ENCODE measurements at regions of chr12 and their contacts with region 1.

Region 1: DNA sequence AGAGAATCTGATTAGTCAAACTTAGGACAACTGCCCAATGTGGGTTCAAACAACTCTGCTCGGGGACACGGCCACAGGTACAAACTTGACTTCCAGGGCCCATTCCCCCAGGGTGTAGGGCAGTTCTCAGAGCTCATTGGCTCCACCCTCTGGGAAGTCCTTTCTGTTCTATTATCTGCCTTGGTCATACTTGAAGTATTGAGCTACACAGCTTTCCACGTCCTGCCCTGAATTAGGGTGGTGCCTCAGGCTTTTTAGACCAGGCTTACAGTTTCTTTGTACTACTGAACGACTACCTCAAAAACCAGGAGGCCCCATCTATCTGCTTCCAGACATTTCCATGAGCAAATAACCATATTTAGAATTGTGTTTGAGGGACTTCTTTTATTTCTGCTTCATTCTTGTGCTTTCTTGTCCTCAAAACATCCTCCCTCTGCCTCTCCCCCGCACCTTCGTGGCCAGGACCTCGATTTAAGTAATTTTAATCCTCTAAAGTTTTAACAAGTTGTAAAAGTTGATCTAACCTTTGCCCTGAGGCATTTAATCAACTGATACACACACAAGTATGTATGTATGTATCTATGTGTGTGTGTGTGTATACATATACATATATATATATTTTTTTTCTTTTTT is 281.7 kb upstream of the AMIGO2 start:
- DNase-seq: peak; percentile 81
- H3K4me3 Mint-ChIP-seq: peak overlapping the region; percentile 72
- H3K27ac Mint-ChIP-seq: peak overlapping the region; percentile 98
- H3K4me1 Mint-ChIP-seq: peaks cover 58% of the 10 kb centered on the region
- H3K27me3 Mint-ChIP-seq: no peaks in the 10 kb centered on the region

Region 2: DNA sequence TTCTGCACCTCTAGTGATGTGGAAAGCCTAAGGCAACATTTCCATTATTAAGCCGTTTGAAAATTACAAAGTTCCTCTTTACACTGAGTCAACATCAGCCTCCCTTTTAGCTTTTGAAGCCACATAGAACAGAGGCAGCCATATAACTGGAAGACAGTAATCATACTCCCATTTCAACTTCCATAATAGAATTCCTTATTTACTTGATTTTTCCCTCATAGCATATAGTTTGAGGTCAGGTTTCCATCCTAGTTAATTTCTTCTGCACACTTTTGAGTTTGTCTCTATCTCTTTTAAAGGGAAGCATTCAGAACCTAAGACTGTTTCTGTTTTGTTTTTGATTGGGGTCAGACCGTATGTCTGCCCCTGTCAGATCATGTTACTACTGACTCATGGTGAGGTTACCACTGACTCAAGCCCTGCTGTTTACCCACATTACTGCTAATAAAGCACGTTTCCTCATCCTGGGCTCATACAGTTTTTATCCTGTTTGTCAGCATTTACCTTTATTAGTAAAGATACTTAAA is 696.7 kb before region 1 on chr12:
- CTCF ChIA-PET with region 1: no interaction called
- intact Hi-C with region 1: no loop called
- DNase-seq: peak; percentile 33
- H3K4me3 Mint-ChIP-seq: no peak overlapping the region
- H3K27ac Mint-ChIP-seq: peak overlapping the region; percentile 63
- H3K4me1 Mint-ChIP-seq: peaks cover 21% of the 10 kb centered on the region
- H3K27me3 Mint-ChIP-seq: no peaks in the 10 kb centered on the region

Region 3: DNA sequence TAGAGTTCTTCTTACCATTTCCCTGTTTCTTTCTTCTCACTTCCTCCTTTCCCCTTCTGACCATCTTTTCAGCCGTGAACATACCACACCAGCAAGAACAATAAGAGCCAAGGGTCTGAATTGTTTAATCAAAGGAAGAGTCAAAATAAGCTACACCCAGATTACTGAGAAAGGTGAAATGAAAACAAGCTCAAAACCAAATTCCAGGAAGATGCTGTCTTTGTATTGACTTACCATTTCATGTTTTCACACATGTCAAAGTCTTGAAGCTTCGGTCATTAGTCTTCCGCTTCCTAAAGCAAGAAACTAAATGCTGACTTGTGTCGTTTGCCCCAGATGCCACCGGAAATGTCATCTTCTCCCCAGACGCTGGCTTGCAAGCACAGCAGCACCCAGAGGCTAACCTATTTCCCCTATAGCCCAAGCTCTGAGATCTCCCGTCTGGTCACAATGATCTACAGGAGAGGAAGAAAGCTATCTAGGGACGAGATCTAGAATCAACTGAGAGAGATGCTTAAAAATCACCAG is 145.3 kb before region 1 on chr12:
- CTCF ChIA-PET with region 1: interaction called, 4 read pairs
- intact Hi-C with region 1: loop called (anchors 1 kb)
- DNase-seq: peak; percentile 83
- H3K4me3 Mint-ChIP-seq: peak overlapping the region; percentile 94
- H3K27ac Mint-ChIP-seq: peak overlapping the region; percentile 100
- H3K4me1 Mint-ChIP-seq: peaks cover 12% of the 10 kb centered on the region
- H3K27me3 Mint-ChIP-seq: no peaks in the 10 kb centered on the region

Region 4: DNA sequence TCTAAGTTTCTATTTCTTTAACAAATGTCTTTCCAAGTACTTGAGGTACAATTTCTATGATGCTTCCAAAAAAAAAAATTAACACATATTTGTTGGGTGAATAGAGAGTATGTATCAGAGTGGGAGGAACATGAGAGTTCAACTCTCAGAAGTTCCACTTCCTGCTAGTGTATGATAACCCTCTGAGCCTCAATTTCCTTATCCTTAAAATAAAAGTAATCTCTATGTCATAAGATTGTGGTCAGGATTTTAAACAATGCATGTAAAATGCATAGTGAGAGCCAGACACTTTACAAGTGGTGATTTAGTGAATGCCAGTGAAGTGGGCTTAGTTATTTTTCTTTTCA is 11.5 kb before region 1 on chr12:
- CTCF ChIA-PET with region 1: interaction called, 5 read pairs
- intact Hi-C with region 1: loop called (anchors 1 kb)
- DNase-seq: no peak
- H3K4me3 Mint-ChIP-seq: peak overlapping the region; percentile 67
- H3K27ac Mint-ChIP-seq: peak overlapping the region; percentile 94
- H3K4me1 Mint-ChIP-seq: peaks cover 85% of the 10 kb centered on the region
- H3K27me3 Mint-ChIP-seq: no peaks in the 10 kb centered on the region

Region 5: DNA sequence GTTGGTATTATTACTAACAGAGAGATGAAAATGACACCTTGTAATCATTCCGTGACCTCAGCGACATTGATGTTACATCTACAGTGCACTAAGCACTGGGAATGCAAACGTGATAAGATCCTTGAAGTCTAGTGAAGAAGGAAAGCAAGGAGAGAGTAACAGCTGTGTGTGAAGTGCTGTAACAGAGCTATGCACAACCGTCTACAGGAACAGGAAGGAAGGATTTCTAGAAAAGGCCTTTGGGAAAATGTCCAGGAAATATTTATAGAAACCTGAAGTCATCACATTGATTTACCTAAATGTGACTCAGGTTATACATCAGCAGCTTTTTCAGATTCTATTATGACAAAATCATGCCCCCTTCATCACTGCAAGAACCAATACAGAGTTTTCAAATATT is 22.4 kb after region 1 on chr12:
- CTCF ChIA-PET with region 1: interaction called, 9 read pairs
- intact Hi-C with region 1: loop called (anchors 1 kb)
- DNase-seq: peak; percentile 62
- H3K4me3 Mint-ChIP-seq: no peak overlapping the region
- H3K27ac Mint-ChIP-seq: peak overlapping the region; percentile 96
- H3K4me1 Mint-ChIP-seq: peaks cover 87% of the 10 kb centered on the region
- H3K27me3 Mint-ChIP-seq: no peaks in the 10 kb centered on the region

Region 6: DNA sequence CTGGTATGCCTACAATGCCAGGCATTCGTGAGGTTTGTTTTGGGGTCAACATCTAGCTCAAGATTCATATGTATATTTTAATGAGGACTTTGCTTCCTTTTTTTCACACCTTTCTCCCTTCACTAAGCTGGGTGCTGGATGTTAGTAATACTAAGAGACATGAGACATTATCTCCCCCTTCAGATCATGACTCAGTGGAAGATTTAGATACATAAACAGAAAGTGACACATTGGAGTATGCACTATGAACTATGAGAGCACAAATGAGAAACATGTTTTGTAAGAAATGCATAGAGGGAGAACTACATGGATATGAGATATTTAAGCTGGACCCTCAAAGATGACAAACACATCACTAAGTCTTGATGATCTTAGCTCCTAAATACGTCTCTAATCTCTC is 58.0 kb after region 1 on chr12:
- CTCF ChIA-PET with region 1: interaction called, 3 read pairs
- intact Hi-C with region 1: loop called (anchors 1 kb)
- DNase-seq: no peak
- H3K4me3 Mint-ChIP-seq: no peak overlapping the region
- H3K27ac Mint-ChIP-seq: peak overlapping the region; percentile 83
- H3K4me1 Mint-ChIP-seq: peaks cover 51% of the 10 kb centered on the region
- H3K27me3 Mint-ChIP-seq: no peaks in the 10 kb centered on the region

Region 7: GRCh38 chr12:47725893-47726292 is 364.4 kb after region 1 on chr12:
- CTCF ChIA-PET with region 1: no interaction called
- intact Hi-C with region 1: no loop called
- DNase-seq: no peak
- H3K4me3 Mint-ChIP-seq: no peak overlapping the region
- H3K27ac Mint-ChIP-seq: no peak overlapping the region
- H3K4me1 Mint-ChIP-seq: peaks cover 19% of the 10 kb centered on the region
- H3K27me3 Mint-ChIP-seq: no peaks in the 10 kb centered on the region

Measured in activated naive CD4-positive, alpha-beta T cell treated with anti-CD3 and anti-CD28 coated beads for 36 hours (primary cell).